Mammary epithelial cell (primary cell): ENCODE measurements at regions of chr1 and their contacts with region 1.

Region 1: DNA sequence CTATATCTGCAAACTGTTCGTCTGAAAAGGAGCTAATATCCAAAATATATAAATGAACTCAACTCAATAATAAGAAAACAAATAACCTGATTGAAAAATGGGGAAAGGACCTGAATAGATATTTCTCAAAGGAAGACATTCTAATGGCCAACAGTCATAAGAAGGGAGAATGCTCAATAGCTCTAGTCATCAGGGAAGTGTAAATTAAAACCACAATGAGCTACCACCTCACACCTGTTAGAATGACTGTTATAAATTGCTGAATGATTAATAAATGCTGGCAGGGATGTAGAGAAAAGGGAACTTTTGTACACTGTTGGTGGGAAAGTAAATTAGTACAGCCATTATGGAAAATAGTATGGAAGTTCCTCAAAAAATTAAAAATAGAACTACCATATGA is 21.2 kb upstream of the C1orf115 start:
- DNase-seq: no peak
- H3K4me3 ChIP-seq: no peak overlapping the region
- H3K27ac ChIP-seq: no peak overlapping the region
- H3K4me1 ChIP-seq: no peaks in the 10 kb centered on the region
- H3K27me3 ChIP-seq: peaks cover 2% of the 10 kb centered on the region
- CTCF ChIP-seq: no peak

Region 2: DNA sequence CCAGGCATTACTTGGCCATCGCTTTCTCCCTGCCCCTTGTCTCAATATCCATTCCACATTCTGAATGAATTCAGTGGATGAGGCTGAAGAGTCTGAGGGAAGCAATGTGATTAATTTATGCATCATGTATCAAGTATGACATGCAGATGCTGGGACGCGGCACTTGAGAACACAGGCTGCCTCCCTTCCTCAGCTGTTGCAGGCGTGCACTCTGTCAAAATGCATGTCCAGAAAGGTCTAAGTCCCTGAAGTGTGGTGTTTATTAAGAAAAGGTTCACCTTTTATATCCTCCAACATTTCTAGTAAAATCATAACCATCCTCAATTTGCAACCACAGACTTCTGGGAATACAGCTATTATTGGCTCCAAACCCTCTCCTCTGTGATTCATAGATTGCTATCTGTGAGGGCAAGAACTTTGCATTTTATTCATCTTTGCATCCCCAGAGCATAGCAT is 374.1 kb before region 1 on chr1:
- CTCF ChIA-PET with region 1: no interaction called
- dilution Hi-C with region 1: no loop called
- in situ Hi-C with region 1: no loop called
- intact Hi-C with region 1: loop called (anchors 10 kb)
- DNase-seq: peak; percentile 19
- H3K4me3 ChIP-seq: no peak overlapping the region
- H3K27ac ChIP-seq: no peak overlapping the region
- H3K4me1 ChIP-seq: no peaks in the 10 kb centered on the region
- H3K27me3 ChIP-seq: no peaks in the 10 kb centered on the region
- CTCF ChIP-seq: no peak

Region 3: DNA sequence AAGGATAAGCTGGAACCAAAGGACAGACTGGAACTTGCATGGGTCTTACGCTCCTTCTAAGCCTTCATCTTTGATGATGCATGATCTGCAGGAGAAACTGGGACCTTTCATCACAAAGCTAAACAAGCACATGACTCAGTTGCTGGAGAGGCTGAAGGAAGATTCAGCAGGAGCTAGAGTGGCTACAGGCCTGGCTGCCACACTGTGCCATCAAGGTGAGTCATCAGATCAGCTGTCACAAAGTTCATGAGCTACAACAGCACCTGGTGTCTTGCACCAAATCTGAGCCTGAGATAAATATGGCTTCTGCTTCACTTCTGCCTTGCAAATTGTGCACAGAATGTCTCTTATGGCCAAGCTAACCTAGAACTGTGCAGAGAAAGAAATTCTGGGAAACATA is 236.6 kb before region 1 on chr1:
- CTCF ChIA-PET with region 1: interaction called, 16 read pairs
- dilution Hi-C with region 1: no loop called
- in situ Hi-C with region 1: no loop called
- intact Hi-C with region 1: no loop called
- DNase-seq: peak; percentile 23
- H3K4me3 ChIP-seq: no peak overlapping the region
- H3K27ac ChIP-seq: no peak overlapping the region
- H3K4me1 ChIP-seq: peaks cover 5% of the 10 kb centered on the region
- H3K27me3 ChIP-seq: no peaks in the 10 kb centered on the region
- CTCF ChIP-seq: no peak

Region 4: GRCh38 chr1:220594356-220594755 is 74.6 kb before region 1 on chr1:
- CTCF ChIA-PET with region 1: no interaction called
- dilution Hi-C with region 1: no loop called
- in situ Hi-C with region 1: no loop called
- intact Hi-C with region 1: no loop called
- DNase-seq: no peak
- H3K4me3 ChIP-seq: no peak overlapping the region
- H3K27ac ChIP-seq: no peak overlapping the region
- H3K4me1 ChIP-seq: no peaks in the 10 kb centered on the region
- H3K27me3 ChIP-seq: no peaks in the 10 kb centered on the region
- CTCF ChIP-seq: no peak